MCF 10A (cell line): ENCODE measurements at regions of chr5 and their contacts with region 1.

Region 1: GRCh38 chr5:128498844-128499455 is 39.1 kb downstream of the FBN2 start:
- DNase-seq: peak; percentile 77
- H3K4me3 Mint-ChIP-seq: no peak overlapping the region
- H3K27ac Mint-ChIP-seq: no peak overlapping the region
- H3K4me1 Mint-ChIP-seq: peaks cover 8% of the 10 kb centered on the region
- H3K27me3 Mint-ChIP-seq: no peaks in the 10 kb centered on the region
- CTCF ChIP-seq: peak; percentile 46

Region 2: DNA sequence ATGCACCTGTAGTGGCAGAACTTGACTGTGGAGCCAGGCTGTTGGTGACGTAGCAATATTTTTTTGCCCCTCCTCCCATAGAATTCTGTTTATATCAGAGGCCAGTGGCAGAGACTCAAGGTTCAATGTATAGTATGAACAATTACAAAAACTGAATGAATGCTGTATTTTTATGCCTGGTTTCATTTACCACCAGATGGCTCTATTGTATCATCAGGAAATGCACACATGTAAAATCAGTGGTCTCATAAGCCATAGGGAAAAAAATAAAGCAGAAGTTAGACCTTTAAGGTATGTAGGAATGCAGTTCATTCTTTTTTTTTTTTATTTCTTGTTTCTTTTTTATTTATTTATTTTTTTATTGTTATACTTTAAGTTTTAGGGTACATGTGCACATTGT is 752.2 kb before region 1 on chr5:
- CTCF ChIA-PET with region 1: no interaction called
- POLR2A ChIA-PET with region 1: no interaction called
- intact Hi-C with region 1: loop called (anchors 10 kb)
- DNase-seq: peak; percentile 43
- H3K4me3 Mint-ChIP-seq: no peak overlapping the region
- H3K27ac Mint-ChIP-seq: no peak overlapping the region
- H3K4me1 Mint-ChIP-seq: no peaks in the 10 kb centered on the region
- H3K27me3 Mint-ChIP-seq: peaks cover 25% of the 10 kb centered on the region
- CTCF ChIP-seq: peak; percentile 57

Region 3: GRCh38 chr5:128213340-128213739 is 285.6 kb before region 1 on chr5:
- CTCF ChIA-PET with region 1: interaction called, 121 read pairs
- POLR2A ChIA-PET with region 1: interaction called, 5 read pairs
- intact Hi-C with region 1: loop called (anchors 1 kb)
- DNase-seq: peak; percentile 78
- H3K4me3 Mint-ChIP-seq: no peak overlapping the region
- H3K27ac Mint-ChIP-seq: no peak overlapping the region
- H3K4me1 Mint-ChIP-seq: peaks cover 11% of the 10 kb centered on the region
- H3K27me3 Mint-ChIP-seq: no peaks in the 10 kb centered on the region
- CTCF ChIP-seq: peak; percentile 96

Region 4: DNA sequence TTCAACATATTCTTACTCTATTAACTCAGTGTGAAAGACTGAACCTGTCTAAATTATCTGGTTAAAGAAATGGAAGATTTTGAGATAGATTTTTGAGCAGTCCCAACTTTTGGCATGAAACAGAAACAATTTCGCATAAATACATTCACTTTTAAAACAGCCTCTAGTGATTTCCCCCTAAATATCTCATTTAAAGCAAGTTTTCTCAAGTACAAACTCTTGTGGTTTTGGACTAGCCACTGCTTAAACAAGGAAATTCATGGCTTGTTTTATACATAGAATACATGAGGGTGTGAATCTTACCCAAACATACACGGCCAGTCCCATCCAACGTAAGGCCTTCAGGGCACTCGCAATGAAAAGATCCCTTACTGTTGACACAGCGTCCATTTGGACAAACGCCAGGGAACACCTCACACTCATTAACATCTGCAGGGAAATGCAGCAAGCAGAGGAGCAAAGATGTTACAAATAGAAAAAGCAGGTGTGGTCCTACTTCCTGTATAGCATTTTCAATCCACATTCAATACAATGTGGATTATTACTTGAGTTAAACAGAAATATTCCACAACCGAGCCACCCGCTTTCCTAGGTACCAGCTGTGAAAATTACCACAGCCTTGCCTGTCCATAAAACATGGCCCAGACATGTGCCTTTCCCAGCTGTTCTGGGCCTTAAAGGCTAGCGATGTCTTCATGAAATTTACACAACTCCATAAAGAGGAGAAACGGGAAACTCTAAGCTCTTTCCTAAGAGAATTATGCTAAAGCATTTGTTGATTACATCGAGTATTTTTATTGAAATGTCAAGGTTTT is 149.7 kb before region 1 on chr5:
- CTCF ChIA-PET with region 1: interaction called, 4 read pairs
- POLR2A ChIA-PET with region 1: no interaction called
- intact Hi-C with region 1: loop called (anchors 10 kb)
- DNase-seq: peak; percentile 98
- H3K4me3 Mint-ChIP-seq: no peak overlapping the region
- H3K27ac Mint-ChIP-seq: peak overlapping the region; percentile 4
- H3K4me1 Mint-ChIP-seq: peaks cover 9% of the 10 kb centered on the region
- H3K27me3 Mint-ChIP-seq: no peaks in the 10 kb centered on the region
- CTCF ChIP-seq: no peak

Region 5: DNA sequence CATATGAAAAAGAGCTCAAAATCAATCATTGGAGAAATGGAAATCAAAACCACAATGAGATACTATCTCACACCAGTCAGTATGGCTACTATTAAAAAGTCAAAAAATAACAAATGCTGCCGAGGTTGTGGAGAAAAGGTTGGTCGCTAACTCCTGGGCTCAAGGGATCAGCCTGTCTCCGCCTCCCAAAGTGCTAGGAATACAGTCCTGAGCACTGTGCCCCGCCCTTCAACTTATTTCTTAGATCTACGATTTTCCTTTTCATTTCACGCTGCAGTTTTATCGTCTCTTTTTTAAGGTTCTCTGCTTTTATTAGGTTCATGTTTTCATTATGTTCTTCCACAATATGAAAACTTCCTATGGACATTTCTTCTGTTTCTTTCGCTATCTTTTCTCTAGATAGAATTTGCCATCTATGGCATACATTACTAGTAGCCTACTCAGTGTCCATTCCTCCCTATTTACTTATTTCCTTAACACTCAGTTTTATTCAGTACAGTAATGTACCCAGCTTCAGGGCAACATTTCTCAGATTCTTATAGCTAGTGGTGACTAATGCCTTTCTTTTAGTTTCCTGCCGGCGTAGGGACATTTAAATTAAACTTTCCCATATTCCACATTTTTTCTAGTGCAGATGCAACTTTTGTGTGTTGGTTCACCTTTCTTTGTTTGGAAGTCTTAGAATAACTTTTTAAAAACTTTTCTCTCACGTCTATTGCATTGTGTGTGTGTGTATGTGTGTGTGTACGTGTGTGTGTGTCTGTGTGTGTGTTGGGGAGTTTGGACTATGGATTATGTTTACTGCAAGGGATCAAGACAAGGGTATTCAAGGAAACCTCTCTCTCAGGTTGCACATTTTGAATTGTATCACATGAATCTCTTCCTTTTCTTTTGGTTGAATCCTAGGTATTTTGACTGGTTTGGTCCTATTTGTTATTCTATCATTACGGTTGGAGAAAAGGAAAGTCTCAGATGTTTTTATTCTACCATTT is 60.7 kb after region 1 on chr5:
- CTCF ChIA-PET with region 1: no interaction called
- POLR2A ChIA-PET with region 1: no interaction called
- intact Hi-C with region 1: no loop called
- DNase-seq: peak; percentile 40
- H3K4me3 Mint-ChIP-seq: no peak overlapping the region
- H3K27ac Mint-ChIP-seq: peak overlapping the region; percentile 7
- H3K4me1 Mint-ChIP-seq: peaks cover 12% of the 10 kb centered on the region
- H3K27me3 Mint-ChIP-seq: no peaks in the 10 kb centered on the region
- CTCF ChIP-seq: no peak

Region 6: GRCh38 chr5:128674825-128675446 is 176.0 kb after region 1 on chr5:
- CTCF ChIA-PET with region 1: interaction called, 15 read pairs
- POLR2A ChIA-PET with region 1: no interaction called
- intact Hi-C with region 1: loop called (anchors 1 kb)
- DNase-seq: peak; percentile 84
- H3K4me3 Mint-ChIP-seq: no peak overlapping the region
- H3K27ac Mint-ChIP-seq: no peak overlapping the region
- H3K4me1 Mint-ChIP-seq: no peaks in the 10 kb centered on the region
- H3K27me3 Mint-ChIP-seq: no peaks in the 10 kb centered on the region
- CTCF ChIP-seq: peak; percentile 81